Common myeloid progenitor, CD34-positive (primary cell): ENCODE measurements at regions of chr12 and their contacts with region 1.

Region 1: GRCh38 chr12:6873094-6874014 is at the start of gene SPSB2:
- DNase-seq: peak; percentile 98 to 99 (median 99)
- H3K4me3 ChIP-seq: peak within 1 kb of the TSS; percentile 77 to 94 (median 82)
- H3K27ac ChIP-seq: peak within 1 kb of the TSS; percentile 55 to 86
- H3K4me1 ChIP-seq: peaks cover 16 to 63% (median 55%) of the 10 kb centered on the region in 4 experiments
- H3K27me3 ChIP-seq: no peaks in the 10 kb centered on the region

Region 2: DNA sequence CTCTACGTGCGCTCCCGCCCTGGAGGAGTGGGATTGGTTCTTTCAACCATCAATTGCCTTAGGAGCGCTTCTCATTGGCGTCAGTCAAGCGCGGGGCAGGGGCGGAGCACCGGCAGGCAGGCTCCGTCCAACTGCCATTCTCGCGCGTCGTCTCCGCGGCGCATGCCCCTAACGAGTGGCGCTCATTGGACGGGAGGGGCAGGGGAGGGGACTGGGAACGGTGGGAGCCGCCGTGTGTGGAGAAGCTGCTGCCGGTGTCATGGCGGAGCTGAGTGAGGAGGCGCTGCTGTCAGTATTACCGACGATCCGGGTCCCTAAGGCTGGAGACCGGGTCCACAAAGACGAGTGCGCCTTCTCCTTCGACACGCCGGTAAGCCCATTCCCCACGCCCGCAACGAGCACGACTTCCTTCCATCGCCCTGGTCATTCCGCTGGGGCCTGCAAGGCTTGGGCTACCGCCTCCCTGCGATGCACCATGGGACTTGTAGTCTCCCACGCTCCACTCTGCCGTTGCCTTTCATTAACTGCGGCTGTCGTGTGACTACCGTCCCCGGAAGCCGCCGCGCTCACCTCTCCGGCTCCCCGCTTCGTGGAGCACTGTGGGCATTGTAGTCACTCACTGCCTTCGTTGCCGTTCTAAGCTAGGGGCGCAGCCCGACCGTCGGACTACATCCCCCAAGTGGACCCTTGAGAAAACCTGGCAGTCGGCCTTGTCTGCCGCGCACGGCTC is 21.3 kb before region 1 on chr12 and contains the start of gene USP5:
- CTCF ChIA-PET with region 1: interaction called, 85 read pairs
- POLR2A ChIA-PET with region 1: interaction called, 7 read pairs
- DNase-seq: peak; percentile 100
- H3K4me3 ChIP-seq: peak within 1 kb of the TSS; percentile 82 to 99 (median 90)
- H3K27ac ChIP-seq: peak within 1 kb of the TSS; percentile 80 to 89
- H3K4me1 ChIP-seq: peaks cover 5 to 41% (median 32%) of the 10 kb centered on the region in 4 experiments
- H3K27me3 ChIP-seq: no peaks in the 10 kb centered on the region

Region 3: GRCh38 chr12:6890789-6891645 is 17.7 kb after region 1 on chr12:
- CTCF ChIA-PET with region 1: interaction called, 91 read pairs
- POLR2A ChIA-PET with region 1: interaction called, 21 read pairs
- DNase-seq: peak; percentile 96 to 99 (median 98)
- H3K4me3 ChIP-seq: peak overlapping the region; percentile 50 to 87 (median 73)
- H3K27ac ChIP-seq: peak overlapping the region; percentile 81 to 93
- H3K4me1 ChIP-seq: peaks cover 6 to 18% (median 15%) of the 10 kb centered on the region in 4 experiments
- H3K27me3 ChIP-seq: no peaks in the 10 kb centered on the region

Region 4: DNA sequence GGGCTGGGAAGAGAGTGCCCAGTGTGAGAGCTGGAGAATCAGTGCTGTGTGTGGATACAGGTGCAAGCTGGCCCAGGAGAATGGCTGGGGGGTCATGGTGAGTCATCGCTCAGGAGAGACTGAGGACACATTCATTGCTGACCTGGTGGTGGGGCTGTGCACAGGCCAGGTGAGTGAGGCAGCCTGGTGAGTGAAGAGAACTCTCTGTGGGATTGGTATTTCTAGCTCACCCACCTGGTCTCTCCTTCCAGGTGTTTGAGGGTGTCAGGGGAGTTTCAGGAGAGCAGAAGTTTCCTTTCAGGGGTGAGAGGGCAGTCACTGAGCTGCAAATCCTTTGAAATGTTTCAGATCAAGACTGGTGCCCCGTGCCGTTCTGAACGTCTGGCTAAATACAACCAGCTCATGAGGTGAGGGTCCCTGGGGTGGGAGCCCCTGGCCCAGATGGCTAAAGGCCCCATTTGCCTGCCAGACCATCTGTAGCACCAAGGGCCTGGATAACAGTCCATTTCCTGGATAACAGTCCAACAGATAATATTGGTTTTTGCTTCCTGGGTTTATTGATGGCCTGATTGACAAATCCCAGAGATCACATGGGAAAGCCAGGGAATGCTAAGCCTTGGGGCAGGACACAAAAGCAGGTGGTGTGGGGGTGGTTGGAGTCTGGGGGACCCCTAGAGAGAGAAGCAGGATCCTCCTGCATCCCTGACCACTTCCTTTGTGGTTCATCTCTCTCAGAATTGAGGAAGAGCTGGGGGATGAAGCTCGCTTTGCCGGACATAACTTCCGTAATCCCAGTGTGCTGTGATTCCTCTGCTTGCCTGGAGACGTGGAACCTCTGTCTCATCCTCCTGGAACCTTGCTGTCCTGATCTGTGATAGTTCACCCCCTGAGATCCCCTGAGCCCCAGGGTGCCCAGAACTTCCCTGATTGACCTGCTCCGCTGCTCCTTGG is 48.9 kb after region 1 on chr12:
- CTCF ChIA-PET with region 1: interaction called, 37 read pairs
- POLR2A ChIA-PET with region 1: no interaction called
- DNase-seq: no peak
- H3K4me3 ChIP-seq: no peak overlapping the region
- H3K27ac ChIP-seq: peak overlapping the region in 1 of 2 experiments; percentile 3
- H3K4me1 ChIP-seq: peaks cover 5 to 52% (median 38%) of the 10 kb centered on the region in 4 experiments
- H3K27me3 ChIP-seq: no peaks in the 10 kb centered on the region

Region 5: DNA sequence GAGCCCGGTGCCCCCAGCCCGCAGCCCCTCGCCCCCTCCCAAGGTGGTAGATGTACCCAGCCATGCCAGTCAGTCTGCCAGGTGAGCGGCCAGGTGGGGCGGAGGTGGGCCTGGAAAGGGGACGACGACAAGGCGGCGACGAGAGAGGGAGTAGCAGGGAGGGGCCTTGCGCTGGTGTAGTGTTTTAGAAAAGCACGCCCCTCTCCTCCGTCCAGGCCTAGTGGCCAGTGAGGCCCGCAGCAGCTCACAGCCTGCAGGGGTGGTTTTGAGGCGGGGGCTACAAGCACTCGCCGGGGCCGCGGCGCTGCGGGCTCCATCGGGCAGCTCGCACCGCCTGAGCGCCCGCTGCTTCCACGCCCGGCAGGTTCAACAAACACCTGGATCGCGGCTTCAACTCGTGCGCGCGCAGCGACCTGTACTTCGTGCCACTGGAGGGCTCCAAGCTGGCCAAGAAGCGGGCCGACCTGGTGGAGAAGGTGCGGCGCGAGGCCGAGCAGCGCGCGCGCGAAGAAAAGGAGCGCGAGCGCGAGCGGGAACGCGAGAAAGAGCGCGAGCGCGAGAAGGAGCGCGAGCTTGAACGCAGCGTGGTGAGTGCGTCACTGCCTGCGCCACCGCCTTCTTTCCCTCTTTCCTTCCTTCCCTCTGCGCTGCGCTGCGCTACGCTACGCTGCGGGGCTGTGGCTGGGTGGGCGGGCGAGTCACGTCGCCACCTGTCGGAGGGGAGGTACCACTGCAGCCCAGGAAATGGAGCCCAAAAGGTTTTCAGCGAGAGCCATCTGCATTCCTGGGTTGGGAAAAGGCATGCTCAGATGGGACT is 64.3 kb after region 1 on chr12:
- CTCF ChIA-PET with region 1: interaction called, 34 read pairs
- POLR2A ChIA-PET with region 1: interaction called, 4 read pairs
- DNase-seq: peak; percentile 95 to 98 (median 98)
- H3K4me3 ChIP-seq: peak overlapping the region; percentile 15 to 87 (median 81)
- H3K27ac ChIP-seq: peak overlapping the region; percentile 74 to 86
- H3K4me1 ChIP-seq: peaks cover 0 to 32% (median 28%) of the 10 kb centered on the region in 4 experiments
- H3K27me3 ChIP-seq: no peaks in the 10 kb centered on the region

Region 6: GRCh38 chr12:6965026-6965661 is 91.8 kb after region 1 on chr12:
- CTCF ChIA-PET with region 1: interaction called, 13 read pairs
- POLR2A ChIA-PET with region 1: no interaction called
- DNase-seq: peak; percentile 89 to 94 (median 91)
- H3K4me3 ChIP-seq: no peak overlapping the region
- H3K27ac ChIP-seq: peak overlapping the region in 1 of 2 experiments; percentile 50
- H3K4me1 ChIP-seq: peaks cover 2 to 64% (median 54%) of the 10 kb centered on the region in 4 experiments
- H3K27me3 ChIP-seq: no peaks in the 10 kb centered on the region